Activated T-helper 1 cell treated with anti-CD3 and anti-CD28 coated beads, Interleukin-12 subunit alpha, Interleukin-12 subunit beta, Interleukin-2, Interleukin-4 antibody, amounts not matched to agents 30 ng/mL and 10 ng/mL and 1 ng/mL, durations not matched to agents 14 hours and 24 hours and 36 hours (primary cell): ENCODE measurements at regions of chr11 and their contacts with region 1.

Region 1: GRCh38 chr11:86938900-86939880 is 16.0 kb downstream of the FZD4 start:
- DNase-seq: no peak
- H3K4me3 Mint-ChIP-seq: no peak overlapping the region
- H3K27ac Mint-ChIP-seq: no peak overlapping the region
- H3K4me1 Mint-ChIP-seq: no peaks in the 10 kb centered on the region
- H3K27me3 Mint-ChIP-seq: peaks cover 11% of the 10 kb centered on the region

Region 2: GRCh38 chr11:86978756-86979608 is 39.8 kb after region 1 on chr11:
- intact Hi-C with region 1: loop called (anchors 5 kb)
- DNase-seq: no peak
- H3K4me3 Mint-ChIP-seq: no peak overlapping the region
- H3K27ac Mint-ChIP-seq: no peak overlapping the region
- H3K4me1 Mint-ChIP-seq: no peaks in the 10 kb centered on the region
- H3K27me3 Mint-ChIP-seq: no peaks in the 10 kb centered on the region

Region 3: GRCh38 chr11:87063982-87064381 is 124.8 kb after region 1 on chr11:
- intact Hi-C with region 1: no loop called
- DNase-seq: no peak
- H3K4me3 Mint-ChIP-seq: no peak overlapping the region
- H3K27ac Mint-ChIP-seq: no peak overlapping the region
- H3K4me1 Mint-ChIP-seq: peaks cover 13% of the 10 kb centered on the region
- H3K27me3 Mint-ChIP-seq: no peaks in the 10 kb centered on the region

Region 4: GRCh38 chr11:87352759-87353707 is 413.8 kb after region 1 on chr11:
- intact Hi-C with region 1: loop called (anchors 1 kb)
- DNase-seq: peak; percentile 68
- H3K4me3 Mint-ChIP-seq: no peak overlapping the region
- H3K27ac Mint-ChIP-seq: no peak overlapping the region
- H3K4me1 Mint-ChIP-seq: peaks cover 14% of the 10 kb centered on the region
- H3K27me3 Mint-ChIP-seq: peaks cover 8% of the 10 kb centered on the region

Region 5: GRCh38 chr11:87421422-87421821 is 482.2 kb after region 1 on chr11:
- intact Hi-C with region 1: loop called (anchors 1 kb)
- DNase-seq: peak; percentile 2
- H3K4me3 Mint-ChIP-seq: no peak overlapping the region
- H3K27ac Mint-ChIP-seq: no peak overlapping the region
- H3K4me1 Mint-ChIP-seq: no peaks in the 10 kb centered on the region
- H3K27me3 Mint-ChIP-seq: peaks cover 5% of the 10 kb centered on the region